ENCODE measurements at regions of chr12 and their contacts with region 1.

Region 1: DNA sequence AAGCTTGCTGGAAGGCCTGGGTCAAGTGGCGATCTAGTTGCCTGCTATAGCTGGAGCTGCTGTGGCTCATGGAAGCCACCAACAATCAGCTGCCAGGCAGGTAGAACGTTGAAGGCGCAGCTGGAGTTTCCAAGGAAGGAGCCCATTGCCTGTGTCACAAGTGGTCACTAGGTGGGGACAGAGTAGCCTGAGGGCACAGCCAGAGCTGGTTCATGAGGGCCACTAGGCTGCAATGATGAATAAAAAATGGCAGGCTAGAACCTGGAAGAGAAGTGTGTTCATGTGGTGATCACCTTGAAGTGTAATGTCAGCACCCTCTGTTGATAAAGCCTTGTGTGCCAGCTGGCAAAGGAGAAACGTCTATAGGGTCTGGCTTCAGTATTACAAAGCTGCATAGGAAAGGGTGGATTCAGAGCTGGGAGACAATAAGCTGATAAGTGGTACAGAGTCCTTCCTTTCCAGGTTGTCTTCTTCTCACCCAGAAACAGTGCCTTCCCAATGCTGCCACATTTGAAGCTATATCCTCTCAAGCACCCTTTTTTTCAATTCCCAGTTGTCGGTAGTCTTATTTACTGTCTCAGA is 165.8 kb downstream of the EMP1 start:
- DNase-seq: peak; percentile 75
- H3K4me3 Mint-ChIP-seq: no peak overlapping the region
- H3K27ac Mint-ChIP-seq: no peak overlapping the region
- H3K4me1 Mint-ChIP-seq: no peaks in the 10 kb centered on the region
- H3K27me3 Mint-ChIP-seq: peaks cover 15% of the 10 kb centered on the region

Region 2: GRCh38 chr12:12835378-12836145 is 526.8 kb before region 1 on chr12:
- CTCF ChIA-PET with region 1: no interaction called
- intact Hi-C with region 1: no loop called
- DNase-seq: no peak
- H3K4me3 Mint-ChIP-seq: no peak overlapping the region
- H3K27ac Mint-ChIP-seq: no peak overlapping the region
- H3K4me1 Mint-ChIP-seq: peaks cover 52% of the 10 kb centered on the region
- H3K27me3 Mint-ChIP-seq: no peaks in the 10 kb centered on the region

Region 3: DNA sequence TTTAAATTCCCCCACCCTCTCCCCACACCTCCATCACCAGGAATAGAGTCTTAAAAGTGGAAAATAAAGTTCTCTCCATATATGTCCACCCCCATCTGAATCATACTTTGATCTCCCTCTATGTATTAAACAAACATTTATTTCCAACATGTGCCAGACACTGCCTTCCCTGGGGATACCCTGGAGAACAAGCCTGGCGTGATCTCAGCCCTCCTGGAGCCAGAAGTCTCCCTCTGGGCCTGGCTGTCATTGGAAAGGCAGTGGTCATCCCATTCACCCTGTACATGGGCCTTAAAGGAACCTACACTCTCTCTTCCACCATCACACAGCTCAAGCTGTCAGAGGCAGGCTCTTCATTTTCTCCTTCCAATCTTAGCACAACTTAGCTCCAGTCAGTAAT is 22.2 kb before region 1 on chr12:
- CTCF ChIA-PET with region 1: no interaction called
- intact Hi-C with region 1: no loop called
- DNase-seq: no peak
- H3K4me3 Mint-ChIP-seq: no peak overlapping the region
- H3K27ac Mint-ChIP-seq: no peak overlapping the region
- H3K4me1 Mint-ChIP-seq: no peaks in the 10 kb centered on the region
- H3K27me3 Mint-ChIP-seq: peaks cover 10% of the 10 kb centered on the region

Region 4: DNA sequence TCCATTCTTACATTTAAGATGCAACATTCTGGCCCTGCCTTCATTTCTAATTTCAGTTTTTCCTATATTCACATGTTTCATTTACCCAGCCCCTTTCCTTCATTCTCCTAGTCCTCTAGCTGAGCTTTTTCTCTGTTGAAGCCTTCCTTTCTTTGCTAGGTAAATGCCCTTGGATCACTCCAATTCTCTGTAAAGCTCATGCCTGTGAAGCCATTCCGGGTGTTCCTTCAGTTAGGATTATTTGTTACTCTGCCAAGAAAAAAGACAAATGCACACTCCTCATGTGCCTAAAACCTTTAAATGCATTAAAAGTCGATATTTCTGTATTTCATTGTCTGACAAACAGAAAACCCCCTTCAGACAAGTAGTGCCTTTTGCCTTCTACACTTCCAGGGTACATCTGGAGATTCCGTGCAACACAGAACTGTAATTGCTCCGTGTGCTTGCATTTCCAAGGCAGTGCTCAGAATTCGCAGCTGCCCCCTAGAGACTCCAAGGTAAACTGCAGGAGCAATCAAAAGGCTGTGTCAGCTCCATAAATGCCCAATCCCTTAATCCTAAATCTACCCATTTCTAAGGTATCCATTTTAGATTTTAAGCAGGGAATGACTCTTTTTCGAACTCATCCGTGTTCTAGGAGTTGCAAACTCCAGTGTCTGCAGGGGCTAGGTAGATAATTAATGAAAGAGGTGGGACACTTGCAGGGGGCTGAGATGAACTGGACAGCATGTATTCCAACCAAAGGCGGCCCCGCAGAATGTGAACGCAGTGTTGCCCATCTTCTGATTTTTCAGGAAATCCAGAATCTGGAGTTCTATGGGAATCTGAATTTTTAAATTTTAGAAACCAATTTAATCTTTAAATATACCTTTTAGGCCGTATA is 298.9 kb after region 1 on chr12:
- CTCF ChIA-PET with region 1: interaction called, 4 read pairs
- intact Hi-C with region 1: loop called (anchors 5 kb)
- DNase-seq: peak; percentile 50
- H3K4me3 Mint-ChIP-seq: no peak overlapping the region
- H3K27ac Mint-ChIP-seq: no peak overlapping the region
- H3K4me1 Mint-ChIP-seq: no peaks in the 10 kb centered on the region
- H3K27me3 Mint-ChIP-seq: peaks cover 8% of the 10 kb centered on the region

Measured in activated naive CD4-positive, alpha-beta T cell treated with anti-CD3 and anti-CD28 coated beads for 36 hours (primary cell).